Aorta (tissue), 5 donors: ENCODE measurements at regions of chr16 and their contacts with region 1.

Region 1: GRCh38 chr16:50368410-50369132 is at the start of gene BRD7:
- DNase-seq: peak; percentile 63 to 85
- ATAC-seq: peak; percentile 92
- H3K4me3 ChIP-seq: peak within 1 kb of the TSS; percentile 99 to 100
- H3K27ac ChIP-seq: peak within 1 kb of the TSS; percentile 63 to 75
- H3K4me1 ChIP-seq: peaks cover 0 to 2% of the 10 kb centered on the region in 2 donors
- H3K27me3 ChIP-seq: no peaks in the 10 kb centered on the region
- total RNA-seq, gene BRD7: 64.2 to 90.2 TPM

Region 2: GRCh38 chr16:50152807-50153452 is 215.6 kb before region 1 on chr16 and contains the start of gene TENT4B:
- intact Hi-C with region 1: loop called (anchors 10 kb)
- DNase-seq: peak; percentile 93 to 96
- ATAC-seq: peak; percentile 95
- H3K4me3 ChIP-seq: peak within 1 kb of the TSS; percentile 78 to 99
- H3K27ac ChIP-seq: peak within 1 kb of the TSS in 1 of 2 donors; percentile 91
- H3K4me1 ChIP-seq: no peaks in the 10 kb centered on the region
- H3K27me3 ChIP-seq: no peaks in the 10 kb centered on the region
- total RNA-seq, gene TENT4B: 13.2 to 13.9 TPM

Region 3: DNA sequence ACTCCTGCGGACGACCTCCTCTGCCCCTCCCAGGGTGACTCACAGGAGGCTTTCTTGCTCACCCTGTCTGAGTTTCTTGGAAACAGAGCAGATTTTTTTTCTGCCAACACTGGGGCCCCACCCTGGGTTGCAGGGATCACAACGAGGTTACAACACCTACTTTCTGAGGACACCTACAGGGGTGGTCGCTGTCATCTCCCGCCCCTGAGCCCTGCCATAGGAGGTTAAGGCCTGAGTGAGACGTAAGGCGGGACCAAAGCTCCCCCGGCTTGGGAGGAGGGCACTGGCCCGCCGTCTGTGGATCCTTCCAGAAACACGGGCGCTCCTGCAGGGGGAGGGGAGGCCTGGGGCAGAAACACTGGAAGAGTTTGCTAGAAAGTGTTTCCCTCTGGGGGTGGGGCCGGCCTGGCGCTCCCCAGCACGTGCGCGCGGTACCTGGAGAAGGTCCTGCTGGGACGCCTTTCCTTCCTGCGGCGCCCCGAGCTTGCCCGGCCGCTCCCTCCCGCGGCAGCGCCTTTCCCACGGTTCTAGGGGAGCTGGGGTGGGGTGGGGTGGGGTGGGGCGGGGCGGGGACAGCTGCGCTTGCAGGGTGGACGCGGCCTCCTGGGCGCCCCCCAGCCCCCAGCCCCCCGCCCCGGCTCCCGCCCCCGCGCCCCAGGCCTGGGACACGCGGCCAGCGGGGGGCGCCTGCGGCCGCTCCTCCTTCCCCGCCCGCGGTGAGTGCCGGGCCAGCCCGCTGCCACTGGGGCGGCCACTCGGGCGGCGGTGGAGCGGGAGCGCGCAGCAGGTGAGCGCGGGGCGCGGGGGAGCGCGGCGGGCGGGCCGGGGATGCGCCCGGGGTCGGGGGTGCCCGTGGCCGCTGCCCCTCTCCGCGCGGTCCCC is 122.9 kb before region 1 on chr16:
- intact Hi-C with region 1: loop called (anchors 10 kb)
- DNase-seq: peak; percentile 68 to 86
- ATAC-seq: peak; percentile 57
- H3K4me3 ChIP-seq: peak overlapping the region; percentile 70 to 90
- H3K27ac ChIP-seq: no peak overlapping the region
- H3K4me1 ChIP-seq: no peaks in the 10 kb centered on the region
- H3K27me3 ChIP-seq: no peaks in the 10 kb centered on the region

Region 4: GRCh38 chr16:50497592-50497991 is 129.0 kb after region 1 on chr16:
- intact Hi-C with region 1: loop called in 1 of 2 experiments (anchors 5 kb)
- DNase-seq: peak in 1 of 2 donors; percentile 68
- ATAC-seq: peak; percentile 38
- H3K4me3 ChIP-seq: no peak overlapping the region
- H3K27ac ChIP-seq: peak overlapping the region; percentile 90 to 99
- H3K4me1 ChIP-seq: peaks cover 6 to 7% of the 10 kb centered on the region in 2 donors
- H3K27me3 ChIP-seq: no peaks in the 10 kb centered on the region

Region 5: DNA sequence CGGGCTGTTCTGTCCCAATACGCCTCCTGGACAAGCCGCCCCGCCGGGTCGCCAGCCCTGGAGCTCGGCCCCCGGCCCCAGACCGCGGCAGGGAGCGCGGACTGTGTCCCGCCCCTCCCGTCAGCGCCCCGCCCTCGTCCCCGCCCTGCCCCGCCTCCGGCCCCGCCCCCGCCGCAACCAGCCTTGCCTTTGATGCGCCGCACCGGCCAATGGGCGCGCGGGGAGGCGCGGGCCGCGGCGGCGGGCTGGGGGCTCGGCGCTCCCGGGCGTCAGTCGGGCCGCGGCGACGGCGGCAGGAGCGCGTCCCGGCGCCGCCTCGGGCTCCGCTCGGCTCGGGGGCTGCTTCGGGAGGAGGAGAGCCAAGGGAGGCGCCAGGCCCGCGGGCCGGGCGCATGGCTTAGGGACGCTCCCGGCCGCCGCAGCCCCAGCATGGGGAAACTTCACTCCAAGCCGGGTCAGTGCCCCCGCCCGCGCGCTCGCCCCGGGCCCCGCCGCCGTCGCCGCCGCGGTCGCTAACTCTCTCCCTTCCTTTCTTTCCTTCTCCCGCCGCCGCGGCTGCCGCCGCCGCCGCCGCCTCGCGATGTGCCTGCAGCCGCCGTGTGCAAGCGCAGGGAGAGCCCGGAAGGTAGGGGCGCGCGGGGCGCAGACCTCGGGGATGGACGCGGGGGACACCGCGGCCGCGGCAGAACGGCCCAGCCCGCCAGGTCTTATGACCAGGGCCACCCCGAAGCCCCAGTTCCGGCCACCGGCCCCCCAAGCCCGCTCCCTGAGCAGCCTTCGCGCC is 179.7 kb after region 1 on chr16 and contains the start of gene NKD1:
- intact Hi-C with region 1: loop called (anchors 5 to 10 kb)
- DNase-seq: peak; percentile 77 to 92
- ATAC-seq: peak; percentile 89
- H3K4me3 ChIP-seq: peak within 1 kb of the TSS; percentile 75 to 98
- H3K27ac ChIP-seq: peak within 1 kb of the TSS; percentile 7 to 79
- H3K4me1 ChIP-seq: no peaks in the 10 kb centered on the region
- H3K27me3 ChIP-seq: no peaks in the 10 kb centered on the region
- total RNA-seq, gene NKD1: 34.4 to 55.2 TPM

Region 6: DNA sequence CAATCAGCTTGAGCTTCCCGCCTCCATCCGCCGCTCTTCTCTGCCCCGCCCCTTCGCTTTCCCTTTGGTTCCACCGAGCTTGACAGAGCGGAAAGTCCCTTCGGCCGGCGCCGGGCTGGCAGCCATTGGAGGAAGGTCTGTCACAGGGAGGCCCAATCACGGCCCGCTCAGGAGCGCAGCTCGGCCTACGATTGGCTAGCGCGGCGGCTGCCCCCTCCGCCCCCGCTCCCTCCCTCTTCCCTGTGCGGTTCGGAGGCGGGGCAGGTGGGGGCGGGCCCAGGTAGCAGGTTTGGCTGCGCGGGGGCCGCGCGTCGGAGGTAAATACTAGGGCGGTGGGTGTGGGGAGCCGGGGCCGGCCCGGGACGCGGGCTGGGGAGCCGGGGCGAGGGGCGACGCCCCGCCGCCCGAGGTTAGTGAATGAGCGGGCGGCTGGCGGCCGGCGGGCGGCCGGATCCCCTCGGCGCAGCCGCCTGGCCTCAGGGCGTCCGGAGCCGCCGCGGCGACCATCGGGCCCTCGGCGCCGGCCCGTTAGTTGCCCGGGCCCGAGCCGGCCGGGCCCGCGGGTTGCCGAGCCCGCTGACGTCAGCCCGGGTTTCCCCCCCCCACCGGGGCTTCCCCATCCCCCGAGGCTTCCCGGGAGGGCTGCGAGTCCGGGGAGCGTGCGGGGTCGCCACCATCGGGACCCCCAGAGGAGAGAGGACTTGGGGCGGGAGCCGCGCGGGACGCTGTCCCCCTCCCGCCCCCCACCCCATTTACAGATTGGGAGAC is 373.4 kb after region 1 on chr16 and contains the start of gene CYLD:
- intact Hi-C with region 1: loop called in 1 of 2 experiments (anchors 10 kb)
- DNase-seq: peak; percentile 100
- ATAC-seq: peak; percentile 99
- H3K4me3 ChIP-seq: peak within 1 kb of the TSS; percentile 79 to 93
- H3K27ac ChIP-seq: peak within 1 kb of the TSS; percentile 16 to 89
- H3K4me1 ChIP-seq: peaks cover 0 to under 1% of the 10 kb centered on the region in 2 donors
- H3K27me3 ChIP-seq: no peaks in the 10 kb centered on the region
- total RNA-seq, gene CYLD: 59.0 to 65.1 TPM